Caco-2 (cell line): ENCODE measurements at regions of chr7 and their contacts with region 1.

Region 1: GRCh38 chr7:54664235-54665228 is 94.5 kb downstream of the SEC61G start:
- DNase-seq: peak; percentile 69 to 81
- H3K4me3 ChIP-seq: peak overlapping the region; percentile 40
- H3K4me3 Mint-ChIP-seq: peak overlapping the region; percentile 71
- H3K27ac Mint-ChIP-seq: no peak overlapping the region
- H3K4me1 ChIP-seq: no peaks in the 10 kb centered on the region; the same call in 1 of the 2 replicates
- H3K4me1 Mint-ChIP-seq: peaks cover 9% of the 10 kb centered on the region
- H3K27me3 ChIP-seq: peaks cover 2% of the 10 kb centered on the region; the same call in 1 of the 2 replicates
- H3K27me3 Mint-ChIP-seq: peaks cover 28% of the 10 kb centered on the region
- CTCF ChIP-seq: peak; percentile 30 to 71

Region 2: DNA sequence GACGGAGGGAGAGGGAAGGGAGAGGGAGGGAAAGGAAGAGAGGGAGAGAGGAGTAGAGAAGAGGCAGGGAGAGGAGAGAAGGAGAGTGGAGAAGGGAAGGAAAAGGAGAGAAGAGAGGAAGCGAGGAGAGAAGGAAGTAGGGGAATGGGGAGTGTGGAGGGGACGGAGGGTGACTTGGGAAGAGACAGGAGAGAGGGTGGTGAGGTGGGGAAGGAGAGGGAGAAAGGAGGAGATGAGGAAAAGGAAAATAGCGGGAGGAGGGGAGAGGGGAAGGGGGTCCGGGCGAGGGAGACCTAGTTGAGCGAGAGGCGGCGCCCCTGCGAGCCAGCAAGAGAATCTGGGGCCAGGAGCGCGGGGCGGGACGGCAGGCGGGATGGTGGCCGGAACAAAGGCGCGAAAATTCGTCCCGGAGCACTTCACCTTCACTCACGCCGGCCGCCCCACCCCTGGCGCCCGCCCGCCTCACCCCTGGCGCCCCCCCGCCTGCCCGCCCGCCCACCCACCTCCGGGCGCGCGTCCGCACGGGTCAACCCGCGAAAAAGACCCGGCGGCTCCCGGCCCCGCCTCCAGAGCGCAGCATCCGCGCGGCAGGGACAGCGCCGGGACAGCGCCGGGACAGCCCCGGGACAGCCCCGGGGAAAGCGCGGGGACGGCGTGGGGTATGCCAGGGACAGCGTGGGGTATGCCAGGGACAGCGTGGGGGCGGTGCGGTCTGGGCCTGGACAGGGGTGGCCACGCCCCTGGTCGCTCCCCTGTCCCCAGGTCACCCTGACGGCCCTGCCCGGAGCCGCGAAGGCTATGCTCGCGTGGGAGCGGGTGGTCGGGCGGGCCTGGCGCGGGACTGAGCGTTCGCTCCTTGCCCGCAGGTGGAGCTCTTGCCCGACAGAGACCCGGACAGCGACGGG is 118.2 kb before region 1 on chr7:
- CTCF ChIA-PET with region 1: interaction called, 3 read pairs
- POLR2A ChIA-PET with region 1: no interaction called
- intact Hi-C with region 1: loop called (anchors 1 kb)
- DNase-seq: peak; percentile 53 to 63
- H3K4me3 ChIP-seq: peak overlapping the region; percentile 30
- H3K4me3 Mint-ChIP-seq: peak overlapping the region; percentile 61
- H3K27ac Mint-ChIP-seq: no peak overlapping the region
- H3K4me1 ChIP-seq: no peaks in the 10 kb centered on the region
- H3K4me1 Mint-ChIP-seq: peaks cover 9% of the 10 kb centered on the region
- H3K27me3 ChIP-seq: no peaks in the 10 kb centered on the region
- H3K27me3 Mint-ChIP-seq: peaks cover 34% of the 10 kb centered on the region
- CTCF ChIP-seq: peak; percentile 44 to 66